Adrenal gland (tissue), 19 donors: ENCODE measurements at regions of chr17 and their contacts with region 1.

Region 1: GRCh38 chr17:80147035-80147836 is at the start of gene EIF4A3:
- DNase-seq: peak; percentile 98 to 99 (median 99)
- H3K4me3 ChIP-seq: peak within 1 kb of the TSS; percentile 49 to 92 (median 88)
- H3K27ac ChIP-seq: peak within 1 kb of the TSS; percentile 76 to 95 (median 84)
- H3K4me1 ChIP-seq: peaks cover 20 to 33% of the 10 kb centered on the region in 2 donors
- H3K27me3 ChIP-seq: no peaks in the 10 kb centered on the region
- CTCF ChIP-seq: peak in 2 of 6 experiments; percentile 1
- POLR2A ChIP-seq: peak; percentile 80 to 86
- total RNA-seq, gene EIF4A3: 31.0 to 161 (median 91.3) TPM

Region 2: GRCh38 chr17:80082403-80083135 is 64.7 kb before region 1 on chr17:
- intact Hi-C with region 1: no loop called
- DNase-seq: peak; percentile 67 to 85 (median 75)
- H3K4me3 ChIP-seq: peak overlapping the region in 1 of 4 donors; percentile 37
- H3K27ac ChIP-seq: no peak overlapping the region
- H3K4me1 ChIP-seq: peaks cover 0 to 3% of the 10 kb centered on the region in 2 donors
- H3K27me3 ChIP-seq: no peaks in the 10 kb centered on the region
- CTCF ChIP-seq: peak; percentile 47 to 79 (median 68)
- POLR2A ChIP-seq: no peak

Region 3: GRCh38 chr17:80219013-80219762 is 72.0 kb after region 1 on chr17:
- intact Hi-C with region 1: loop called (anchors 5 kb)
- DNase-seq: peak; percentile 74 to 91 (median 86)
- H3K4me3 ChIP-seq: peak overlapping the region; percentile 14 to 92 (median 78)
- H3K27ac ChIP-seq: peak overlapping the region; percentile 32 to 95 (median 88)
- H3K4me1 ChIP-seq: peaks cover 15 to 27% of the 10 kb centered on the region in 2 donors
- H3K27me3 ChIP-seq: no peaks in the 10 kb centered on the region
- CTCF ChIP-seq: no peak
- POLR2A ChIP-seq: no peak

Region 4: DNA sequence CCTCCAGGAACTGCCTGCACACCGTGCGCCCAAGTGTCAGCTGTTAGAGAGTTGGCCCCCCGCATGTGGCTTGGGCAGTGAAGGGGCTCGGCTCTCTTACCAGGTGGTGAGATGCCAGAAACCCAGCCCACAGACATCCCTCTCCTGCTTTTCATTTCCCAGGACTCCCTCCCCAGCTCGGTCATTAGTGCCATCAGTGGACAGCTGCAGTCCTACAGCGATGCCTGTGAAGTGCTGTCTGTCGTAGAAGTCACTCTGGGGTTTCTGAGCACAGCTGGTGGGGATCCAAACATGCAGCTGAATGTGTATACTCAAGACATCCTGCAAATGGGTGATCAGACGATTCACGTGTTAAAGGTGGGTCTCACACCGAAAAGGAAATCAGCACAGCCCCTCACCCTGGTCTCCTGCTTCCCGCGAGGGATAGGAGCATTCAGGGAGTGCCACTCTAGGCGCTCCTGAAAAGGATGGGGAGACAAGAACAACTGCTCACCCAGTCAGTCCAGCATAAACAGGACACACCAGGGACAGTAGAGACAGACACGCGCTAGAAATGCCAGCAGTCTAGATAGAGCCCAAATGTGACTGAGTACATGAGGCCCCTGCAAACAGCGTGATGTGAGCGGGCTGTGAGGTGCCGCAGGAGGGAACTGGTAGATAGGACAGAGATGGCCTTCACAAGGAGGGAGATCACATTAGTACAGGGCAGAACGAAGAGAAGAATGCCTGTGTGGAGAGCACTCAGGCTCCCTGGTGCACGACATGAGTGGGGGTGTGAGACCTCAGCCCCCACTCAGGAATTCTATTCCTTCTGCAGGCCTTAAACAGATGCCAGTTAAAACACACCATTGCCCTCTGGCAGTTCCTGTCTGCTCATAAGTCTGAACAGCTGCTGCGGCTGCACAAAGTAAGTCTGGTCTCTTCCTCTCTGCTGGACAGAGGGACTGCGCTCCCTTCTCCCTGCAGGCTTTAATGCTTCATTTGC is 242.1 kb after region 1 on chr17:
- intact Hi-C with region 1: loop called in 1 of 2 experiments (anchors 10 kb)
- DNase-seq: no peak
- H3K4me3 ChIP-seq: no peak overlapping the region
- H3K27ac ChIP-seq: peak overlapping the region in 1 of 5 donors; percentile 17
- H3K4me1 ChIP-seq: peaks cover 4 to 11% of the 10 kb centered on the region in 2 donors
- H3K27me3 ChIP-seq: no peaks in the 10 kb centered on the region
- CTCF ChIP-seq: no peak
- POLR2A ChIP-seq: no peak